AG04449 (cell line): ENCODE measurements at regions of chr18 and their contacts with region 1.

Region 1: GRCh38 chr18:10851824-10852319 is 297.5 kb downstream of the PIEZO2 start:
- DNase-seq: peak; percentile 16
- H3K4me3 ChIP-seq: no peak overlapping the region
- CTCF ChIP-seq: peak; percentile 38

Region 2: GRCh38 chr18:10841203-10841602 is 10.7 kb before region 1 on chr18:
- CTCF ChIA-PET with region 1: interaction called, 22 read pairs
- POLR2A ChIA-PET with region 1: no interaction called
- DNase-seq: no peak
- H3K4me3 ChIP-seq: no peak overlapping the region
- CTCF ChIP-seq: no peak

Region 3: GRCh38 chr18:10953672-10954071 is 101.8 kb after region 1 on chr18:
- CTCF ChIA-PET with region 1: no interaction called
- POLR2A ChIA-PET with region 1: no interaction called
- DNase-seq: no peak
- H3K4me3 ChIP-seq: no peak overlapping the region
- CTCF ChIP-seq: no peak

Region 4: DNA sequence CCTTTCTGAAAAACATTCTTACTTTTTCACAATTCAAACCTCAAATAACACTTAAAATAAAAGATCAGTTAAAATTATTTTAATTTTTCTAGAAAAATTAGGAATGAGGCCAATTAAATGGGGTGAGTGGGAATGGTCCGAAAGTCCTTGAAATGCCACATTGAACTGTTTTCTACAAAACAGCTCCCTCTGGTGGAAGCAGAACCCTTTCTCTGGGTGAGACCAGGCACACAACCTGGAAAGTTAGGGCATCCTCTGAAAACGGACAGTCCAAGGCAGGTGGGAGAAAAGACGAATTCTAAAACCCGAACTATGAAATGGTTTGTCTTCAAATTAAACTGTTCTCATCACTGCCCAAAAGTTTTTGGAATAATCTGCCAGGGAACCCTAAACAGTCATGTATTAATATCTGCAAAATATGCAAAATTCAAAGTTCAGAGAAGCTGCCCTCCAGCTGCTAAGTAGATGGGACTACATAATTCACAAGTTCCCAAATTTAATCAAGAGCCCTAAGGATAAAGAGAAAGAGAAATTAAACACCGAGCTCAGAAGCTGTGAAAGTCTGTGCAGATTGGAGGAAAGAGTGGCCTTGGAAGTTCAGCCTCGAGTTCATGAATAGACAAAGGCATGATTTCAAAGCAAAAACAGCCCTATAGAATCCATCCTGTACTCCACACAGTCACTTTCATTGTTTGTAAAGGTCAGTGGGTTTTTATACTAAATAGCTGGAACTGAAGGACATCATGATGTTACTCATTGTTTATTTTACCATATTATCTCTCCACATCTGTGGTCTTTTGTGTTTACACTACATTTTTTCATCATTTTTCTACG is 189.2 kb after region 1 on chr18:
- CTCF ChIA-PET with region 1: interaction called, 28 read pairs
- POLR2A ChIA-PET with region 1: no interaction called
- DNase-seq: no peak
- H3K4me3 ChIP-seq: no peak overlapping the region
- CTCF ChIP-seq: peak; percentile 67

Region 5: GRCh38 chr18:11121426-11121825 is 269.6 kb after region 1 on chr18:
- CTCF ChIA-PET with region 1: no interaction called
- POLR2A ChIA-PET with region 1: no interaction called
- DNase-seq: no peak
- H3K4me3 ChIP-seq: no peak overlapping the region
- CTCF ChIP-seq: no peak

Region 6: DNA sequence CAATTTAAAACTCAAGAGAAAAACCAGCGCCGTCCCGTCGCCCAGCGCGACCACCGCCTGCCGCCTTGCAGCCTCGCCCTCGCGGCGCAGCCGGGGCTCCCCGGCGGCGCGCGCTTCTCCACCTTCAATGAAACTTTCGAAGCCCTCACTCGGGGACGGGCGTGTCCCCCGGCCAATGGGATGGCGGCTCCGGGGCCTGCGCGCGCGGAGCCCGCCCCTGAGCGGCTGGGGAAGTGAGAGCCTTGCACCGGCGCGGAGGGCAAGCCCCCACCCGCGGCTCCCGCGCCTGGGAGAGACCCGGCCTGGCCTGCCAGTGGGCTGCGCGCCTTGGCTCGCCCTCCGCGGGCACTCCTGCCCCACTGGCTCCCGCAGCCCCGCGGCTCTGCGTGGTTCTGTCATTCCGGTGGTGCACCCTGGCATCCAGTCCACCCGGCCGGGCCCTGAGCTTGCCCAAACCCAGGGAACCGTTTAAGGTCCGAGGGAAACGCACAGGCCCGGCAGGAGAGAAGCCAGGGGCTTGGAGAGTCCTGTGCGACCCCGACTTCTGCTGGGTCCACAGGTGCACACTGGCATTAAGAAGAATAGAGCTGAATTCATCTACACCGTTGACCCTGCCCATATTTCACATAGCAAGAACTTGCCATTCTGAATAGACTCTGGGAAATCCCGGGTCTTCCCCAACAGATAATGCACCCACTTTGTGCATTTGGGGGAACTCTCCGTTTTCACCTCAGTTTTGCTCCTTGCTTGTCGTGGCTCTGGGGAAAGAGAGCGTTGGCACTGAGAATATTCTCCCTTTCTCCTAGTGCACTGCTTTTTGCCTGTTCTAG is 297.8 kb after region 1 on chr18 and contains the start of gene PIEZO2:
- CTCF ChIA-PET with region 1: interaction called, 104 read pairs
- POLR2A ChIA-PET with region 1: no interaction called
- DNase-seq: no peak
- H3K4me3 ChIP-seq: peak within 1 kb of the TSS; percentile 57
- CTCF ChIP-seq: no peak

Region 7: DNA sequence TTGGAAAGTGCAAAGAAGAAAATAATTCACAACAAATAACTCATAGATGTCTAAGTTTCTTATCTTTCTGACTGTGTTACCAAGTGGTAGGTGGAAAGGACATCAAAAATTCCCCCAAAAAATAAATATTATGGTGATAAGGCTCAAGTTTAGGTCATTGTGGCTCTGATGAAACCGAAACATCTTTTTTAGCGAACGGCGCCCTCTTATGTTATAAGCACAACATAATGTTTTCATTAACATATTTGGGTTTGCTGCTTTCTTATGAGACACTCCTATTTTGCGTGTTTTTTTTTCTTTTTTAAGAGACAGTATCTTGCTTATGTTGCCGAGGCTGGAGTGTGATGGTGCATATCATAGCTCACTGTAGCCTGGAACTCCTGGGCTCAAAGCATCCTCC is 718.9 kb after region 1 on chr18:
- CTCF ChIA-PET with region 1: interaction called, 36 read pairs
- POLR2A ChIA-PET with region 1: no interaction called
- DNase-seq: no peak
- H3K4me3 ChIP-seq: no peak overlapping the region
- CTCF ChIP-seq: peak; percentile 5